PC-3 (cell line): ENCODE measurements at regions of chr11 and their contacts with region 1.

Region 1: DNA sequence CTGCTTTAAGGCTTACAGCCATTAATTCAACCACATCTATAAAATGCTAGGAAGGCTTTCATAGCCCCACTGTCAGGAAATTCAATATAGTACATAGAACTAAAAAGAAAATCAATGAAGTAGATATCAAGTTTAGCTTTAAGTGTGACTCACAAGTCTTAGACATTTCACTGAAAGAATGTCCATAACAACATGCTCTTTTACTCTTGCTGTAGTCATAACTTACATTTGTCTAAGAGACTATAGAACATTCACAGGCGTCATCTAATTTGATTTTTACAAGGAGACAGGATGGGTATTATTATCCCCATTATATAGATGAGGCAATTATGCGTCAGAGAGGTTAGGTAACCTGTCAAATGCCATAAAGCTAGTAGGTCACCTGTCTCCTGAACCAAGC is 37.0 kb downstream of the BDNF start:
- DNase-seq: peak; percentile 32
- ATAC-seq: peak; percentile 74
- H3K4me3 ChIP-seq: no peak overlapping the region
- H3K27ac ChIP-seq: no peak overlapping the region
- H3K4me1 ChIP-seq: peaks cover 4% of the 10 kb centered on the region; the same call in 1 of the 2 replicates
- H3K27me3 ChIP-seq: no peaks in the 10 kb centered on the region
- CTCF ChIP-seq: no peak

Region 2: GRCh38 chr11:27497284-27497866 is 165.9 kb before region 1 on chr11:
- CTCF ChIA-PET with region 1: no interaction called
- POLR2A ChIA-PET with region 1: interaction called, 11 read pairs
- intact Hi-C with region 1: no loop called
- DNase-seq: peak; percentile 62
- ATAC-seq: no peak
- H3K4me3 ChIP-seq: no peak overlapping the region
- H3K27ac ChIP-seq: no peak overlapping the region
- H3K4me1 ChIP-seq: 0 out of 2 replicates have a peak, but pooled peaks cover 3% of the 10 kb centered on the region
- H3K27me3 ChIP-seq: no peaks in the 10 kb centered on the region
- CTCF ChIP-seq: peak; percentile 65